ENCODE measurements at regions of chr15 and their contacts with region 1.

Region 1: GRCh38 chr15:63188926-63189871 is at the start of gene RAB8B:
- DNase-seq: peak; percentile 97
- ATAC-seq: peak; percentile 90
- H3K4me3 ChIP-seq: peak within 1 kb of the TSS; percentile 74 to 99 (median 83)
- H3K27ac ChIP-seq: peak within 1 kb of the TSS; percentile 76 to 95 (median 84)
- H3K4me1 ChIP-seq: peaks cover 7 to 27% of the 10 kb centered on the region in 2 donors
- H3K27me3 ChIP-seq: no peaks in the 10 kb centered on the region
- CTCF ChIP-seq: peak in 1 of 5 experiments; percentile 18
- POLR2A ChIP-seq: peak; percentile 72 to 78
- total RNA-seq, gene RAB8B: 7.2 to 33.4 (median 14.3) TPM

Region 2: GRCh38 chr15:63122002-63122893 is 67.0 kb before region 1 on chr15:
- in situ Hi-C with region 1: no loop called
- intact Hi-C with region 1: loop called (anchors 1 kb)
- DNase-seq: peak; percentile 80 to 91
- ATAC-seq: peak; percentile 92 to 95
- H3K4me3 ChIP-seq: peak overlapping the region; percentile 77 to 99 (median 86)
- H3K27ac ChIP-seq: peak overlapping the region; percentile 90 to 99 (median 93)
- H3K4me1 ChIP-seq: peaks cover 4 to 13% of the 10 kb centered on the region in 2 donors
- H3K27me3 ChIP-seq: no peaks in the 10 kb centered on the region
- CTCF ChIP-seq: peak in 4 of 5 experiments; percentile 13 to 50 (median 31)
- POLR2A ChIP-seq: peak; percentile 48 to 65

Region 3: DNA sequence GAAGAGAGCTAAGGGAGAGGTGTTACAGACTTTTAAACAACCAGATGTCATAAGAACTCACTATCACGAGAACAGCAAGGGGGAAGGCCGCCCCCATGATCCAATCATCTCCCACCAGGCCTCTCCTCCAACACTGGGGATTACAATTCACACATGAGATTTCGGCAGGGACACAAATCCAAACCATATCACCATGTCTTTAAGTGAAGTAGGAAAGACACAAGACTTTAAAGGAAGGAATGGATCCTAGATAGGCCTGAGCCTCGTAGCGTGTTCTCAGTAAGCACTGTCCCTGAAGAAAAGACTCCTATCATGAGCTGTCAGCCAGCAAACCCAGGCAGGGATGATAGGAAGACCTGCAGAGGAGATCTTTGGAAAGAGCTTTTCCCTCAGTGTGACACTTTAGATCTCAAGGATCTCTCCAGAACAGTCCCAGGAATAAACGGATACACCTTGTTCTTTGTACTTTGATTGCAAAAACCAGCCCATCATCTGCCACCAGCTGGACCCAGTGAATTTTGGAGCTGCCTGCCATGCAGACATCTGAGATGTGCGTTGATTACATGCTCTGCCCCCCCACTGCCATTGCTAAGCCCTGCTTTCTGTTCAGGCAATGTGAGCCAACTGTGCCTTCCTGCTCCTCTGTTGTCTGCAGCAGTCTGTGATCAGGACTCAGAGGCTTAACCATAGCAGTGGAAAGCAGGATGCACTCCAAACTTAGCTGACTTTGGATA is 16.7 kb before region 1 on chr15:
- in situ Hi-C with region 1: no loop called
- intact Hi-C with region 1: loop called (anchors 2 kb)
- DNase-seq: peak; percentile 90 to 93
- ATAC-seq: peak; percentile 87 to 94
- H3K4me3 ChIP-seq: no peak overlapping the region
- H3K27ac ChIP-seq: peak overlapping the region; percentile 90 to 95 (median 92)
- H3K4me1 ChIP-seq: peaks cover 27 to 48% of the 10 kb centered on the region in 2 donors
- H3K27me3 ChIP-seq: no peaks in the 10 kb centered on the region
- CTCF ChIP-seq: no peak
- POLR2A ChIP-seq: peak; percentile 15 to 43

Region 4: DNA sequence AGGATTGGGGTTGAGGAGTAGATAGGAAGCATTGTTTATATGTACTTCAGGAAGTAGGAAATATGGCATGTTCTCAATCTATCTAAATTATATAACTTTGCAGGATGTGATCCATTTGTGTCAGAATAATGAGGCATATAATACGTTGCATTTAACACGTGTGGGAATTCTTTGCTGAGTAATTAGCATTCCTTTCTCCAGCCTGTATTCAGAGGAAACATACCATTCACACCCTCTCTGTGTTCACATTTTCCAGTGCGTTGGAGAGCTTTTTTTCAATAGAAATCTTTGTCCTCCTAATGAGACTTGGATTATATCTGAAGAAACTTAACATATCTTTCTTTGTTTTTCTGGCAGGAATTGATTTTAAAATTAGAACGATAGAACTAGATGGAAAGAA is 55.2 kb after region 1 on chr15:
- in situ Hi-C with region 1: no loop called
- intact Hi-C with region 1: loop called (anchors 5 kb)
- DNase-seq: no peak
- ATAC-seq: no peak
- H3K4me3 ChIP-seq: no peak overlapping the region
- H3K27ac ChIP-seq: peak overlapping the region; percentile 12 to 51 (median 38)
- H3K4me1 ChIP-seq: peaks cover 21 to 41% of the 10 kb centered on the region in 2 donors
- H3K27me3 ChIP-seq: no peaks in the 10 kb centered on the region
- CTCF ChIP-seq: no peak
- POLR2A ChIP-seq: no peak

Region 5: DNA sequence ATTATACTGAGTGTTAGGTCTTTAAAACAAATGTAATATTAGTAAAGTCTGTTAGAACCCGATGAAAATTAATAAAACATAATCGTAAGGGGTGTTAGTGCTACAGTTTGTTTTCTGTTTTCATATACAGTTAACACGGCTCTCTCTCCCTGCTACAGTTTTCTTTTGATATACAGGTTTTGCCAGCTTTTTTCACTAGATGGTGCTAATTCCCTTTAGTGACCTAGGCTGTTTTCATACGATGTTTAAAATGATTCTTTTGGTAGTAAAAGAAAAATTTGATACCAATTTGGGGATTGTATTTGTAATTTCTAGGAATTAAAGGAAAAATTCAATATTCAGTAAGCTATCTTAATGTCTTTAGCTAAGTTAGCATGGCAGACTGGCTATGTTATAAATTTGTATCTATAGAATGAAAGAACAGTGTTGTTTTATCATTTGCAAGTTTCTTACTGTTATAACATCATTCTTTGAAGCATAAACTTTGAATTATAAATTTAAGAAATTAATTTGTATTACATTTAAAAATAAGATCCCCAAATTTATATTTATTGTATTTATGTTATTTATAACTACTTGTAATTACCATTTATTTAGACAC is 99.7 kb after region 1 on chr15:
- in situ Hi-C with region 1: no loop called
- intact Hi-C with region 1: no loop called
- DNase-seq: no peak
- ATAC-seq: peak; percentile 61 to 74
- H3K4me3 ChIP-seq: no peak overlapping the region
- H3K27ac ChIP-seq: no peak overlapping the region
- H3K4me1 ChIP-seq: peaks cover 0 to 5% of the 10 kb centered on the region in 2 donors
- H3K27me3 ChIP-seq: no peaks in the 10 kb centered on the region
- CTCF ChIP-seq: peak in 4 of 5 experiments; percentile 38 to 71 (median 69)
- POLR2A ChIP-seq: no peak